ENCODE measurements at regions of chr16 and their contacts with region 1.

Region 1: GRCh38 chr16:50584033-50584722 is 36.0 kb downstream of the NKD1 start:
- DNase-seq: no peak
- ATAC-seq: peak in 2 of 4 experiments; percentile 37 to 38
- H3K4me3 ChIP-seq: no peak overlapping the region
- H3K4me3 Mint-ChIP-seq: no peak overlapping the region
- H3K27ac ChIP-seq: no peak overlapping the region
- H3K27ac Mint-ChIP-seq: peak overlapping the region in 1 of 2 donors; percentile 42
- H3K4me1 ChIP-seq: peaks cover 2 to 17% of the 10 kb centered on the region in 2 experiments
- H3K4me1 Mint-ChIP-seq: peaks cover 18 to 25% (median 20%) of the 10 kb centered on the region in 3 donors
- H3K27me3 ChIP-seq: no peaks in the 10 kb centered on the region
- H3K27me3 Mint-ChIP-seq: no peaks in the 10 kb centered on the region

Region 2: GRCh38 chr16:50464325-50465290 is 119.6 kb before region 1 on chr16:
- CTCF ChIA-PET with region 1: no interaction called
- POLR2A ChIA-PET with region 1: no interaction called
- DNase-seq: no peak
- ATAC-seq: no peak
- H3K4me3 ChIP-seq: no peak overlapping the region
- H3K4me3 Mint-ChIP-seq: no peak overlapping the region
- H3K27ac ChIP-seq: no peak overlapping the region
- H3K27ac Mint-ChIP-seq: no peak overlapping the region
- H3K4me1 ChIP-seq: peaks cover 0 to 3% of the 10 kb centered on the region in 2 experiments
- H3K4me1 Mint-ChIP-seq: peaks cover 6 to 14% (median 8%) of the 10 kb centered on the region in 3 donors
- H3K27me3 ChIP-seq: peaks cover 0 to 48% of the 10 kb centered on the region in 2 experiments
- H3K27me3 Mint-ChIP-seq: peaks cover 5 to 45% of the 10 kb centered on the region in 2 donors

Region 3: DNA sequence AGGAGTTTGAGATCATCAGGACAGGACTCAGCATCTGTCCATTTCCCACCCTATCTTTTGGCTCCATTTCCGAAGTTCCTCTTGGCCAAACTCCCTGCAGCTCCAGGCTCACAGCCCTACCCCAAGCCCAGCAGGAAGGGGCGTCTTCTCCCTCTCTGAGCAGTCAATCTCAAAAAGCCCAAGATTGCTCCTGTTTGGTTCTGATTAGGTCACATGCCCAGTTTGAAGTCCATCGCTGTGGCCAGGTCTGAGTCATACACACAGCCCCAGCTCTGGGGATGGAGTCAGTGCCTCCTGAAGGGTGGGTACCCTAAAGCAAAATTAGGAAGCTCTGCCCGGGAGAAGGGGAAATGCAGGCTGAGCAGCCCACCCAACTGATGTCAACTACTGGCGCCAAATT is 73.1 kb after region 1 on chr16:
- CTCF ChIA-PET with region 1: no interaction called
- POLR2A ChIA-PET with region 1: interaction called in 1 of 2 experiments, 11 read pairs
- DNase-seq: no peak
- ATAC-seq: no peak
- H3K4me3 ChIP-seq: no peak overlapping the region
- H3K4me3 Mint-ChIP-seq: no peak overlapping the region
- H3K27ac ChIP-seq: no peak overlapping the region
- H3K27ac Mint-ChIP-seq: no peak overlapping the region
- H3K4me1 ChIP-seq: peaks cover 0 to 3% of the 10 kb centered on the region in 2 experiments
- H3K4me1 Mint-ChIP-seq: peaks cover 0 to 2% (median 1%) of the 10 kb centered on the region in 3 donors
- H3K27me3 ChIP-seq: no peaks in the 10 kb centered on the region
- H3K27me3 Mint-ChIP-seq: no peaks in the 10 kb centered on the region

Region 4: GRCh38 chr16:50735629-50736122 is 151.5 kb after region 1 on chr16:
- CTCF ChIA-PET with region 1: no interaction called
- POLR2A ChIA-PET with region 1: no interaction called
- DNase-seq: no peak
- ATAC-seq: no peak
- H3K4me3 ChIP-seq: no peak overlapping the region
- H3K4me3 Mint-ChIP-seq: no peak overlapping the region
- H3K27ac ChIP-seq: no peak overlapping the region
- H3K27ac Mint-ChIP-seq: peak overlapping the region in 1 of 2 donors; percentile 62
- H3K4me1 ChIP-seq: peaks cover 12 to 17% of the 10 kb centered on the region in 2 experiments
- H3K4me1 Mint-ChIP-seq: peaks cover 18 to 47% (median 36%) of the 10 kb centered on the region in 3 donors
- H3K27me3 ChIP-seq: no peaks in the 10 kb centered on the region
- H3K27me3 Mint-ChIP-seq: no peaks in the 10 kb centered on the region

Region 5: GRCh38 chr16:50747207-50747956 is 163.2 kb after region 1 on chr16:
- CTCF ChIA-PET with region 1: no interaction called
- POLR2A ChIA-PET with region 1: interaction called in 1 of 2 experiments, 13 read pairs
- DNase-seq: peak in 13 of 35 experiments; percentile 7 to 77 (median 30)
- ATAC-seq: peak; percentile 74 to 79 (median 77)
- H3K4me3 ChIP-seq: peak overlapping the region; percentile 15 to 37
- H3K4me3 Mint-ChIP-seq: peak overlapping the region; percentile 72 to 98 (median 81)
- H3K27ac ChIP-seq: peak overlapping the region; percentile 100
- H3K27ac Mint-ChIP-seq: peak overlapping the region; percentile 95 to 97
- H3K4me1 ChIP-seq: peaks cover 16 to 62% of the 10 kb centered on the region in 2 experiments
- H3K4me1 Mint-ChIP-seq: peaks cover 71 to 77% (median 76%) of the 10 kb centered on the region in 3 donors
- H3K27me3 ChIP-seq: no peaks in the 10 kb centered on the region
- H3K27me3 Mint-ChIP-seq: no peaks in the 10 kb centered on the region